ENCODE measurements at regions of chr3 and their contacts with region 1.

Region 1: DNA sequence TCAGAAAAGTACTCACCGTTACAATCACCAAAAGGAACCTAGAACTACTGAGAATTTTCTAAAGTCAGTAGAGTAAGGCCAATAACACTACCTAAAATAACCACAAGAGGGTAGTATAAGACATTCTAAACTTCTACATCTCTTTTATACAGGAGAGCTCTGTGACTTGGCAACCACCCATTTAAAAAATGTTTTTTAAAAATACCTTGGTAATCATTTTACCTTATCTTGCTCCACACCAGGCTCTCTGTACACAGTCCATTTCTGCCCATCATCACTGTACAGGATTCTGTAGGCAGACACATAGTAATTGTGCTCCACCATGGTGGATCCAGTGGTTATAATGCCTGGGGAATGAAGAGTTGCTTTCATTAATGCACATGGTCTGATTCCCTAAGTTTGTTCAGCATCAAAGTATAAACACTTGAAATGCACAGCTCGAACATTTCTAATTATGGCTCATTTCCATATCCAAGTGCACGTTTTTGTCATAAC is 54.5 kb downstream of the ST3GAL6 start:
- DNase-seq: no peak
- ATAC-seq: peak; percentile 73
- H3K4me3 Mint-ChIP-seq: no peak overlapping the region
- H3K27ac Mint-ChIP-seq: no peak overlapping the region
- H3K4me1 Mint-ChIP-seq: no peaks in the 10 kb centered on the region
- H3K27me3 Mint-ChIP-seq: no peaks in the 10 kb centered on the region

Region 2: DNA sequence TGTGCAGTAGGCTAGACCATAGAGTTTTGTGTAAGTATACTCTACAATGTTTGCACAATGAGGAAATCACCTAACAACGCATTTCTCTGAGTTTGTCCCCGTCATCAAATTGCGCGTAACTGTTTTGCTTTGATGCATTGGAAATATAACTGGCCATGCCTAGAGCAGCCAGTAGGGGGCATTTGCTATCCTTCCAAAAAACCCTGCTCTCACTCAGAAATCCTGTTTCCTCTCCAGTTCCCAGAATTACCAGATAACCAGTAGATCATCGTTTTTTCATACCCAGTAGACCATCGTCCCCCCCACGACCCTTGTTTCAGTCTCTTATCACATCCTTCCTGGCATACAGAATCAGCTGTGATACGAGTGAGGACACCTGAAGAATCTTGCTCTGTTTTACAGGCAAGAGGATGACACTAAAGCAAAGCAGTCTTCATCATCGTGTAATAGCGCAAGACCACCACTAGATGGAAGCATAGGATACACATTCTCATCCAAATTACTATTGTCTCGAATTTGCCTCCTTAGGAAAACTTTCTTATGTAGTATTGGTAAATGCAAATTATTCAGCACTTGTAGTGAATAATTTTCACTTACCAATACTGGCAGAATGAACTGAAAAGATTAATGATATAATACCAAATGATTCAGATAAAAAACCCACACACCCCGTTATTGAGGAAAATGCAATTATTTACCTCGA is 778.1 kb before region 1 on chr3:
- CTCF ChIA-PET with region 1: interaction called, 7 read pairs
- POLR2A ChIA-PET with region 1: no interaction called
- intact Hi-C with region 1: loop called (anchors 1 to 2 kb)
- DNase-seq: peak; percentile 84
- ATAC-seq: peak; percentile 88
- H3K4me3 Mint-ChIP-seq: peak overlapping the region; percentile 76
- H3K27ac Mint-ChIP-seq: peak overlapping the region; percentile 97
- H3K4me1 Mint-ChIP-seq: peaks cover 12% of the 10 kb centered on the region
- H3K27me3 Mint-ChIP-seq: peaks cover 4% of the 10 kb centered on the region

Region 3: DNA sequence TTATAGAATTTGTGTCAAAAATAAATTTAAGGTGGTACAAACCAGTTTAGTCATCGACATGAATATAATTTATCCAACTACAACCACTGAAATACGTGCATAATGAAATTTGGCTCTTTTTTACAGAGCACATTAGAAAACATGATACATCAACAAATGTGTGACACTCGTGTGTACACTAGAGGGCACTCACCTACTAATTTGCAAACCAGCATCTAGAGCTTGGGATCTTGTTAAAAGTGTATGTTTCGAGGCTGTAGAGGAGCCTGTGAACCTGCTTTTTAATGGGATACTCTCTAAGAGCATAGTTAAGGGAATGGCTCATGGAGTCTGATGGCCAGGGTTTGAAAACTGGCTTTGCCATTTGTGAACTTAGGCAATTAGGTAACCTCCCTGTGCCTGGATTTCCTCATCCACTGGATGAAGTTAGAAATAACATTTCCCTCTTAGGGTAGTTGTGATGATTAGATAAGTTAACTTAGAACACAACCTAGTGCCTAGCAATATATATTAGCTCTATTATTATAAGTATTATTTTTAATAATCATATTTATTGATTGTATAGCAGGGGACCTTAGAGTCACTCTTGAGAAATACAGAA is 215.4 kb before region 1 on chr3:
- CTCF ChIA-PET with region 1: interaction called, 34 read pairs
- POLR2A ChIA-PET with region 1: no interaction called
- intact Hi-C with region 1: loop called (anchors 1 to 2 kb)
- DNase-seq: peak; percentile 30
- ATAC-seq: peak; percentile 78
- H3K4me3 Mint-ChIP-seq: no peak overlapping the region
- H3K27ac Mint-ChIP-seq: no peak overlapping the region
- H3K4me1 Mint-ChIP-seq: peaks cover 4% of the 10 kb centered on the region
- H3K27me3 Mint-ChIP-seq: peaks cover 2% of the 10 kb centered on the region

Region 4: GRCh38 chr3:98628317-98628716 is 189.3 kb before region 1 on chr3:
- CTCF ChIA-PET with region 1: no interaction called
- POLR2A ChIA-PET with region 1: no interaction called
- intact Hi-C with region 1: no loop called
- DNase-seq: no peak
- ATAC-seq: no peak
- H3K4me3 Mint-ChIP-seq: no peak overlapping the region
- H3K27ac Mint-ChIP-seq: no peak overlapping the region
- H3K4me1 Mint-ChIP-seq: no peaks in the 10 kb centered on the region
- H3K27me3 Mint-ChIP-seq: no peaks in the 10 kb centered on the region

Region 5: DNA sequence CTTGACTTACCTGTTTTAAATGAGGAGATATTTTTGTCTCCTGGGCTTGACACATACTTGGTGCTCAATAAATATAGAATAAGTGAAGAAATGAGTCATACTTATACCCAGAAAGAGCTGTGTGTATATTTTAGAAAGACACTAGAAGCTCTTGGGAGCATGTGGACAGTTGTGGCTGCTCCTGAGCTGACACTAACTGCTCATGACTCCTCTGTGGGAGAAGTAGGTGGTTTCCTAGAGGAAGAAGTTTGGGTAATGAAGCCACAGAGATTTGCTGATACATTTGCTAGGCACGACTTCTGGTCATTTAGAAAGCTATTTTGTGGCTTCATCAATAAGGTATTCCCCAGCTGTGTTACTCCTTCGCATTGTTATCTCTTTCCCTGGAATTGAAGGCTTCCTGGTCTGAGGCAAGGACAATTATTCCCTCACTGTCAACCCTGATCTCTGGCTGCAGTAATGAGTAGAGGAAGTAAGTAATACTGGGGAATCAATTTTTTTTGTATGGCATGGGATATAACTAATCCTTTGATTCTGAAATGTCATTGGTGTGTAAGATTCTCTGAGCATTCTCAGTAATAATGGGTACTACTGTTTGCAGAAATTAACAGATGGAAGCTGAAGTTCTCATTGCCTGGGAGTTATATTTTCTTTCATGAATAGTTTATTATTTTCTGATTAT is 163.5 kb after region 1 on chr3:
- CTCF ChIA-PET with region 1: no interaction called
- POLR2A ChIA-PET with region 1: no interaction called
- intact Hi-C with region 1: no loop called
- DNase-seq: no peak
- ATAC-seq: no peak
- H3K4me3 Mint-ChIP-seq: no peak overlapping the region
- H3K27ac Mint-ChIP-seq: no peak overlapping the region
- H3K4me1 Mint-ChIP-seq: peaks cover 5% of the 10 kb centered on the region
- H3K27me3 Mint-ChIP-seq: peaks cover 17% of the 10 kb centered on the region

Region 6: DNA sequence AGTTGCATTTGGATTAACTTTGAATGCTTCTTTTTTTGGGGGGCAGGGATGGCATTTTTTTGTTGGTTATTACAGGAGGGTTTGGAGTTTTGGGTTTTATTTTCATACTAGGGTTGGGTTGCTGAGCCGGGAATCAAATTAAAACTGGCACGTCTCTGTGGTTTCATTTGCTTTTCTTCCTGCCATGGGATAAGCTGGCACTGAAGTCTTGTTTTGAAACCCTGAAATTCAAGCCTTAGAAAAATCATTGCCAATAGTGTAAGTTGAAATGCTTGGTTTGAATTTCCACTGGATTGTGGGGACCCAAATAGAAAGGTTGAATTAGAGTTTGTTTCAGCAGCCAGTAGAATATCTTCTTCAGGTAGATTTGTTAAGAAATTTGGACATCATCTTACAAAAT is 277.0 kb after region 1 on chr3:
- CTCF ChIA-PET with region 1: no interaction called
- POLR2A ChIA-PET with region 1: no interaction called
- intact Hi-C with region 1: loop called in 1 of 2 experiments (anchors 5 kb)
- DNase-seq: no peak
- ATAC-seq: no peak
- H3K4me3 Mint-ChIP-seq: no peak overlapping the region
- H3K27ac Mint-ChIP-seq: no peak overlapping the region
- H3K4me1 Mint-ChIP-seq: no peaks in the 10 kb centered on the region
- H3K27me3 Mint-ChIP-seq: no peaks in the 10 kb centered on the region

Region 7: GRCh38 chr3:99134986-99135385 is 317.4 kb after region 1 on chr3:
- CTCF ChIA-PET with region 1: no interaction called
- POLR2A ChIA-PET with region 1: no interaction called
- intact Hi-C with region 1: no loop called
- DNase-seq: no peak
- ATAC-seq: no peak
- H3K4me3 Mint-ChIP-seq: no peak overlapping the region
- H3K27ac Mint-ChIP-seq: no peak overlapping the region
- H3K4me1 Mint-ChIP-seq: no peaks in the 10 kb centered on the region
- H3K27me3 Mint-ChIP-seq: no peaks in the 10 kb centered on the region

Region 8: DNA sequence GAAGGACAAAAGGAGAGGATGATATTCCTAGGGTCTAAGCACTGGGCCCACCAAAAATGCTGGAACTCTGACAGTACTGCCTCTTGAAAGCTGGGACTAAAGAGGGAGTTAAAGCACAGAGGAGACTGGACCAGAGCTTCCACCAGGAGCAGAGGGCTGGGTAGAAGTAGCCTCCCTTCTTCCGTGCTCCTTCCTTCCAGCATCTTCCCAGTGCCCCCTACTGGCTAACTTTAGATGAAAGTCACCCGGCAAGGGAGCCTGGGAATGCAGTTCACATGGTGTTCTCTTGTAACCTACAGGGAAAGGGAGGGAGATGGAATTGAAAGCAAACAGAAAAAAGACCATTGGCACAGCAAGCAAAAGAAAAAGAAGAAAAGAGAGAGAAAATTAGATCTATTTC is 714.7 kb after region 1 on chr3:
- CTCF ChIA-PET with region 1: no interaction called
- POLR2A ChIA-PET with region 1: no interaction called
- intact Hi-C with region 1: loop called in 1 of 2 experiments (anchors 10 kb)
- DNase-seq: peak; percentile 25
- ATAC-seq: no peak
- H3K4me3 Mint-ChIP-seq: no peak overlapping the region
- H3K27ac Mint-ChIP-seq: no peak overlapping the region
- H3K4me1 Mint-ChIP-seq: no peaks in the 10 kb centered on the region
- H3K27me3 Mint-ChIP-seq: peaks cover 2% of the 10 kb centered on the region

Region 9: GRCh38 chr3:99753268-99753975 is 935.8 kb after region 1 on chr3:
- CTCF ChIA-PET with region 1: interaction called, 9 read pairs
- POLR2A ChIA-PET with region 1: no interaction called
- intact Hi-C with region 1: loop called (anchors 1 kb)
- DNase-seq: peak; percentile 40
- ATAC-seq: peak; percentile 83
- H3K4me3 Mint-ChIP-seq: no peak overlapping the region
- H3K27ac Mint-ChIP-seq: no peak overlapping the region
- H3K4me1 Mint-ChIP-seq: no peaks in the 10 kb centered on the region
- H3K27me3 Mint-ChIP-seq: peaks cover 12% of the 10 kb centered on the region